HCT116 (cell line): ENCODE measurements at regions of chr19 and their contacts with region 1.

Region 1: GRCh38 chr19:17390665-17391370 is 3.2 kb downstream of the CCDC194 start:
- DNase-seq: peak; percentile 80
- ATAC-seq: peak; percentile 96
- H3K4me3 ChIP-seq: peak overlapping the region; percentile 40 to 55
- H3K27ac ChIP-seq: peak overlapping the region; percentile 11; the same call in 1 of the 2 replicates
- H3K4me1 ChIP-seq: peaks cover 11 to 35% of the 10 kb centered on the region in 2 experiments
- H3K27me3 ChIP-seq: no peaks in the 10 kb centered on the region
- CTCF ChIP-seq: peak; percentile 60 to 64 (median 62)
- POLR2A ChIP-seq: no peak
- RAD21 ChIP-seq: peak; percentile 79

Region 2: GRCh38 chr19:17292286-17293097 is 98.3 kb before region 1 on chr19:
- CTCF ChIA-PET with region 1: interaction called, 11 read pairs
- POLR2A ChIA-PET with region 1: interaction called, 3 read pairs
- RAD21 ChIA-PET with region 1: no interaction called
- intact Hi-C with region 1: loop called (anchors 1 kb)
- DNase-seq: peak; percentile 86
- ATAC-seq: peak; percentile 85
- H3K4me3 ChIP-seq: peak overlapping the region; percentile 60 to 67
- H3K27ac ChIP-seq: peak overlapping the region; percentile 95
- H3K4me1 ChIP-seq: peaks cover 20 to 52% of the 10 kb centered on the region in 2 experiments
- H3K27me3 ChIP-seq: no peaks in the 10 kb centered on the region
- CTCF ChIP-seq: peak; percentile 65 to 88 (median 78)
- POLR2A ChIP-seq: peak; percentile 83
- RAD21 ChIP-seq: peak; percentile 94

Region 3: DNA sequence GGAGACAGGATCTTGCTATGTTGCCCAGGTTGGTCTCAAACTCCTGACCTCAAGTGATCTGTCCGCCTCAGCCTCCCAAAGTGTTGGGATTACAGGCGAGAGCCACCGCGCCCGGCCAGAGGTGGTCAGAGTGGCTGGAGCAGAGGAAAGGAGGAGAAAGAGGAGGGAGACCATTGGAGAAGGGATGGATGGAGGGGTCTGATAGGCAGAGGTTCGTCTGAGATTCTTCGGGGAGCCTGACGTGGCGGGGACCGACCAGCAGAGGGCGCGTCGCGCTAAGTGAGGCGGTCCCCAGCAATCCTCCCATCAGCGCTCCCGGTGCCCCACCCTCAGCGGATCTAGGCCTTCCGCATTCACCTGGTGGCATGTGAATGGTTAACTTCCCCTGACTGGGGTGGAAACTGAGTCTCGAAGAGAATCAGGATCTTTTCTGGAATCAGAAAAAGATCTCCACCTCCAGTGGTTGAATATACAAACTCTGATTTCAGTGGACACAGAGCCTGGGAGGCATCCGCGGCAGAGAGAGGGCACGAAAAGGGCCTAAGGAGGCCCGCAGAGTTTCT is 44.6 kb before region 1 on chr19:
- CTCF ChIA-PET with region 1: interaction called, 6 read pairs
- POLR2A ChIA-PET with region 1: no interaction called
- RAD21 ChIA-PET with region 1: interaction called in 1 of 2 experiments, 6 read pairs
- intact Hi-C with region 1: loop called (anchors 1 kb)
- DNase-seq: peak; percentile 60
- ATAC-seq: peak; percentile 94
- H3K4me3 ChIP-seq: no peak overlapping the region
- H3K27ac ChIP-seq: peak overlapping the region; percentile 28; the same call in 1 of the 2 replicates
- H3K4me1 ChIP-seq: peaks cover 18 to 31% of the 10 kb centered on the region in 2 experiments; a peak in 3 of 4 replicates
- H3K27me3 ChIP-seq: no peaks in the 10 kb centered on the region
- CTCF ChIP-seq: peak in 2 of 3 experiments; percentile 83 to 91
- POLR2A ChIP-seq: no peak
- RAD21 ChIP-seq: peak; percentile 86

Region 4: GRCh38 chr19:17448131-17448967 is 57.5 kb after region 1 on chr19 and contains the start of gene TMEM221:
- CTCF ChIA-PET with region 1: interaction called, 3 read pairs
- POLR2A ChIA-PET with region 1: no interaction called
- RAD21 ChIA-PET with region 1: no interaction called
- intact Hi-C with region 1: loop called (anchors 5 kb)
- DNase-seq: no peak
- ATAC-seq: peak; percentile 78
- H3K4me3 ChIP-seq: peak within 1 kb of the TSS; percentile 56 to 70
- H3K27ac ChIP-seq: peak within 1 kb of the TSS; percentile 79; the same call in 1 of the 2 replicates
- H3K4me1 ChIP-seq: peaks cover 24 to 46% of the 10 kb centered on the region in 2 experiments
- H3K27me3 ChIP-seq: no peaks in the 10 kb centered on the region
- CTCF ChIP-seq: peak; percentile 48 to 75 (median 62); a peak in 5 of 6 replicates
- POLR2A ChIP-seq: peak; percentile 31
- RAD21 ChIP-seq: no peak
- total RNA-seq, gene TMEM221: 3.4 TPM

Region 5: DNA sequence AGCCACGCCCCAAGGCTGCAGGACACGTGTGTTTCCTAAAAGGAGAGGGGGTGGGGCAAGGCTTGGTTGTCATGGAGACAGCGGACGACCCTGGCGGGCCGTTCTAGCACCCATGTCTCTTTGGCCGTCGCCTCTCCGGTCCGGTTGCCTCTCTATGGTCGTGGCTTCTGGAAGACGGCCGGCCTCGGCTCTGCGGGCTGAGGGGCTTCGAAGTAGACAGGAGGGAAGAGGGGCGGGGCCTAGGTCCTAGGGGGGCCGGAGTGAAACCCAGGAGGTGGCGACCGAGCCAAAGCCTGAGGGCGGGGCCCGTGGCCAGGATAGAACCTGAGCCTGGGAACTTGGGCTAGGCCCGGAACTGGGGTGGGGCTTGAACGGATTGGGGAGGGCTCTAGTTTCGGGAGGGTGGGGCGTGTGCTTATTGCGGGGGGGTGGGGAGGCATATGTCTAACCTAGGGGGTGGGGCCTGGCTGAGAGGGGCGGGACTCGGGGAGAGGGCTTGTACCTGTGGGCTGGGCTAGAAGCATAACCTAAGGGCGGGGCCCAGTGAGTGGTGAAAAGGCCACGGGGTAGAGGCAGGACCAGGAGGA is 78.8 kb after region 1 on chr19:
- CTCF ChIA-PET with region 1: interaction called, 8 read pairs
- POLR2A ChIA-PET with region 1: interaction called, 3 read pairs
- RAD21 ChIA-PET with region 1: no interaction called
- intact Hi-C with region 1: loop called (anchors 1 kb)
- DNase-seq: peak; percentile 96
- ATAC-seq: peak; percentile 73
- H3K4me3 ChIP-seq: peak overlapping the region; percentile 66 to 78
- H3K27ac ChIP-seq: peak overlapping the region; percentile 83
- H3K4me1 ChIP-seq: peaks cover 37 to 67% of the 10 kb centered on the region in 2 experiments
- H3K27me3 ChIP-seq: no peaks in the 10 kb centered on the region
- CTCF ChIP-seq: no peak
- POLR2A ChIP-seq: no peak
- RAD21 ChIP-seq: no peak